Pancreas (tissue), 10 donors: ENCODE measurements at regions of chr7 and their contacts with region 1.

Region 1: GRCh38 chr7:116671681-116672595 is at the start of gene MET:
- DNase-seq: peak; percentile 85 to 91 (median 90)
- ATAC-seq: peak; percentile 90 to 94 (median 92)
- H3K4me3 ChIP-seq: peak within 1 kb of the TSS; percentile 42 to 70 (median 59)
- H3K27ac ChIP-seq: peak within 1 kb of the TSS; percentile 91 to 95 (median 92)
- H3K4me1 ChIP-seq: peaks cover 0 to 15% (median 4%) of the 10 kb centered on the region in 3 donors
- H3K27me3 ChIP-seq: no peaks in the 10 kb centered on the region
- CTCF ChIP-seq: peak; percentile 14 to 61 (median 33)
- total RNA-seq, gene MET: 10.7 to 23.5 (median 17.9) TPM

Region 2: DNA sequence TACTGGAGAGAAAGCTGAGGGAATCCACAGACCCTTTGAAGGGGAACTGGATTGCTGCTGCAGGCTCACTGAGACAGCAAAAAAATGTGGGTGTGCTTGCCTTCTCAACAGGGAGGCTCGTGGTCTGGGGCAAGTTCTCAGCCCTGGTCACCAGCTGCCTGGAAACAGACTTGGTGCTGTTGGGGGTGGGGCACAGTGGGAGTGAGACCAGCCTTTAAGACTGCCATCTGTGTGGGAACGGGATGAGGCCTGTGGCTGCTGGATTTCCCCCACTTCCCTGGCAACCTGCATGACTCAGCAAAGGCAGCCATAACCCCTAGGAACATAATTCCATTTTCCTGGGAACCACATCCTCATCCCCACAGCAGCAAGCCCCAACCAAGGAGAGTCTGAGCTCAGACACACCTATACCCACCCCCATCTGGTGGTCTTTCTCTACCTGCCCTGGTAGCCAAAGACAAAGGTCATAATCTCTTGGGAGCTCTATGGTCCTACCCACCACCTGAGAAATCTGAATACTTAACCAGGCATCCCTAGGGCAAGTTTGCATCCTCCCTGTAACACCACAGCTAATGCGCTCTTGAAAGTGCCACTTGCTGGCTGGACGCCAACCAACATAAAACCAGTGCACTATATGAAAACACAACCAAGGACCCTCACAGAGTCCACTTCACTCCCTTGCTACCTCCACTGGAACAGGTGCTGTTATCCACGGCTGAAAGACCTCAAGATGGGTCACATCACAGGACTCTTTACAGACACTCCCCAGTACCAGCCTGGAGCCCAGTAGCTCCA is 596.4 kb before region 1 on chr7:
- intact Hi-C with region 1: no loop called
- DNase-seq: peak in 1 of 6 donors; percentile 12
- ATAC-seq: no peak
- H3K4me3 ChIP-seq: no peak overlapping the region
- H3K27ac ChIP-seq: no peak overlapping the region
- H3K4me1 ChIP-seq: no peaks in the 10 kb centered on the region
- H3K27me3 ChIP-seq: no peaks in the 10 kb centered on the region
- CTCF ChIP-seq: no peak

Region 3: GRCh38 chr7:116165717-116166116 is 506.2 kb before region 1 on chr7:
- intact Hi-C with region 1: no loop called
- DNase-seq: no peak
- ATAC-seq: peak in 2 of 4 donors; percentile 53 to 73
- H3K4me3 ChIP-seq: no peak overlapping the region
- H3K27ac ChIP-seq: no peak overlapping the region
- H3K4me1 ChIP-seq: peaks cover 0 to 10% (median 7%) of the 10 kb centered on the region in 3 donors
- H3K27me3 ChIP-seq: no peaks in the 10 kb centered on the region
- CTCF ChIP-seq: no peak

Region 4: DNA sequence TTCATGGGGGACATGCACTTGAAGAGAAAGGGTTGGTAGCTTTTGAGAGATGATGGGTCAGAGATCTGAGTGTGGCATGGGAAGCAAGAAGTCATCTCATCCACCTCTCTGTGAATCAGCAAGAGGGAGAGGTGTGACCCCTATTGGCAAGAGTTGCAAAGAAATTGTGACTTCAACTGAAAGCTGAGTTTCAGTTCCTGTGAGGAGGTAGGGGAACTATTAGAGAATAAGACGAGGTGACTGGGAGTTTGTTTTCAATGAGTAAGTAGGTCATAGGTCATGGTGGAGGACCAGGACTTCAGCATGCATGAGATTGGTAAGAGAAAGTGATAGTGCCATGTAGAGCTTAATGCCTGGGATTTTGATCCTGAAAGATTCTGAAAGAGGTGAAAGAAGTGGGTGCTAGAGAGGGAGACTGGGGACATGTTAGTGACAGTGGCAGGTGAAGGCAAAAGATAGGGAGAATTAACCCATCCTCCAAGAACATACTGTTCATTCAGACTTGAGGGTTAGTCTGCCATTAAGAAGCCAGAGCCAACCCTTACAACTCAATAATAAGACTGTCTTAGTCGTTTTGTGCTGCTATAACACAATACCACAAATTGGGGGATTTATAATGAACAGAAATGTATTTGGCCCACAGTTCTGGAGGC is 115.0 kb after region 1 on chr7:
- intact Hi-C with region 1: loop called in 1 of 3 experiments (anchors 5 kb)
- DNase-seq: no peak
- ATAC-seq: peak; percentile 25 to 88 (median 72)
- H3K4me3 ChIP-seq: no peak overlapping the region
- H3K27ac ChIP-seq: no peak overlapping the region
- H3K4me1 ChIP-seq: peaks cover 0 to 12% (median under 1%) of the 10 kb centered on the region in 3 donors
- H3K27me3 ChIP-seq: no peaks in the 10 kb centered on the region
- CTCF ChIP-seq: peak in 1 of 4 donors; percentile 21